Posterior vena cava (tissue), 2 donors: ENCODE measurements at regions of chr1 and their contacts with region 1.

Region 1: DNA sequence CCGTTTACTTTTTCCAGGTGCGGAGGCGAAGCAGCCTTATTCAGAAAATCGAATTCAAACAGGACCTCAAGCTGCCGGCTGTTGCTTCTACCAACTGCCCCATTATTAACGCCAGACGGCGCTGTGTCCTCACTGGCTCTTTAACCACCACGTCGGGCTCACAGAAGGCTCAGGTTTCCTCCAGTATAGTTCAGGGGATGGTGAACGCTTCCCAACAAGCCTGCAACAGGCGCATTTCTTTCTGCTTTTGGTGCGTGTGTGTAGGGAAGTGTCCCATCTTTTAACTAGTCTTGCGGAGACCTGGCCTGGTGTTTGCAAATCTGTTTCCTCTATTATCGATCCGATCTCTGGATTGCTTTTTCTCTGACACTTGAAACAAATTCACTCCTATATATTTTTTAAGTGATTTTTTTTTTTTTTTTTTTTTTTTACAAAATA is 791 bp upstream of the STUM start:
- DNase-seq: peak; percentile 93

Region 2: GRCh38 chr1:224615861-224616755 is 1931.7 kb before region 1 on chr1 and contains the start of gene CNIH3:
- intact Hi-C with region 1: no loop called
- DNase-seq: no peak
- total RNA-seq, gene CNIH3: 1.6 to 2.6 TPM

Region 3: DNA sequence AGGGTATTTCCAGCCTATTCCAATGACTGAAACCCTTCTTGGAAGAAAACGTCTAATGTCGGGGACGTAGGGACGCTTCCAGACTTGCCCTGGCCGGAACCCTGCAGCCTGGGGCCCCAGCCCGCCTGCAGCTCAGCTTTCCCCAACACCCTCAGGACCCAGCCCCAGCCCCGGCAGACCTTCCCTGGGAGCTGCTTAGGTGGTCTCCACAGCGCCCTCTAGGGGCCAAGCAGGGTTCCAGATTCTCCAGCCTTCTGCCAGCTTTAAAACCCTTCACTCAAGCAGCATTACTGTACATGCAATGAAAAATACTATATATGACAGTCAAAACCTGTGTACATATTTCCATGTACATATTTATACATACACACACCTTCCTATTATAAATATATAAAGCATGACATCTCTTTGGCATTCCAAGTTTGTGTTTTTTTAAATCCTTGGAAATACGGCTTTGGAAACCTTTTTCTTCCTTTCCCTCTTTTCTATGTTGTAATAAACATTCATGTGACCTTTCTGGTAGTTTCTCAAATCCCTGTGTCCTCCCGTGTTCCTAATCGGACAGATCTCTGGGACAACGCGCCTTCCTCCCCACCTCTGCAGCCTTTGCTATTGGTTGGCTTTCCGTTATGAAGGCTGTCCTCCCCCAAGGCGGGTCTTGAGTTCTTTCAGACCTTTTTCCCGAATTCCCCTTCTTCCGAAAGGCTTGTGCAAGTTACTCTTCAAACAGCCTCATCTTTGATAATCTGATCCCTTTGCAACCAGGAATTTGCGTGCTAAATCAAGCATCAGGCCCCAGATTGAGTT is 61.1 kb after region 1 on chr1:
- intact Hi-C with region 1: loop called (anchors 1 to 5 kb)
- DNase-seq: no peak